Activated CD4-positive, alpha-beta memory T cell treated with anti-CD3 and anti-CD28 coated beads, Interleukin-2, amount 10 ng/mL, durations not matched to agents 7 days and 5 days (primary cell): ENCODE measurements at regions of chr16 and their contacts with region 1.

Region 1: GRCh38 chr16:86664533-86665318 is 86.4 kb downstream of the FOXL1 start:
- DNase-seq: peak; percentile 78
- H3K4me3 Mint-ChIP-seq: peak overlapping the region; percentile 43
- H3K27ac Mint-ChIP-seq: peak overlapping the region; percentile 92
- H3K4me1 Mint-ChIP-seq: peaks cover 33% of the 10 kb centered on the region
- H3K27me3 Mint-ChIP-seq: peaks cover 34% of the 10 kb centered on the region

Region 2: GRCh38 chr16:86604436-86605193 is 60.1 kb before region 1 on chr16:
- CTCF ChIA-PET with region 1: no interaction called
- POLR2A ChIA-PET with region 1: interaction called, 16 read pairs
- DNase-seq: peak; percentile 55
- H3K4me3 Mint-ChIP-seq: peak overlapping the region; percentile 74
- H3K27ac Mint-ChIP-seq: peak overlapping the region; percentile 59
- H3K4me1 Mint-ChIP-seq: peaks cover 9% of the 10 kb centered on the region
- H3K27me3 Mint-ChIP-seq: peaks cover 18% of the 10 kb centered on the region

Region 3: GRCh38 chr16:86634292-86634691 is 30.4 kb before region 1 on chr16:
- CTCF ChIA-PET with region 1: no interaction called
- POLR2A ChIA-PET with region 1: no interaction called
- DNase-seq: no peak
- H3K4me3 Mint-ChIP-seq: no peak overlapping the region
- H3K27ac Mint-ChIP-seq: no peak overlapping the region
- H3K4me1 Mint-ChIP-seq: peaks cover 13% of the 10 kb centered on the region
- H3K27me3 Mint-ChIP-seq: peaks cover 11% of the 10 kb centered on the region

Region 4: DNA sequence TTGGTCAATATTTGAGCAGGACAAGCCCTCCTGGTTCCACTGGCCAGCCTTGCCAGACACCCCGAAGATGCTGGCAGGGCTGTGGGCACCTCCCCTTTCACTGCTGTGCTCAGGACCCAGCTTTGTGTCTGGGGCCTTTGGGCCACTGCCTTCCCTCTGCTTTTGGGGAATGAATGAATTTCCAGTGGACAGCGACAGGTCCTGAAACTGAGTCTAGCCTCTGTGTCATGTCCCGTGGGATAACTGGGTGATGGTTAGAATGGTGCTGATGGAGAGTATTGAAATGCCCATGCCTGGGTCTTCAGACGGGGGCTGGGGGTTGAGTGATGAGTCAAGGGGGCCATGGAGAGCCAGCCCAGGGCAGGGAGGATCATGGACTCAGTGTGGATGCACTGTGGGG is 49.4 kb after region 1 on chr16:
- CTCF ChIA-PET with region 1: no interaction called
- POLR2A ChIA-PET with region 1: no interaction called
- DNase-seq: no peak
- H3K4me3 Mint-ChIP-seq: no peak overlapping the region
- H3K27ac Mint-ChIP-seq: no peak overlapping the region
- H3K4me1 Mint-ChIP-seq: no peaks in the 10 kb centered on the region
- H3K27me3 Mint-ChIP-seq: no peaks in the 10 kb centered on the region